ENCODE measurements at regions of chr14 and their contacts with region 1.

Region 1: GRCh38 chr14:36070031-36070719 is 106.3 kb downstream of the PTCSC3 start:
- DNase-seq: no peak
- H3K4me3 Mint-ChIP-seq: no peak overlapping the region
- H3K27ac Mint-ChIP-seq: no peak overlapping the region
- H3K4me1 Mint-ChIP-seq: no peaks in the 10 kb centered on the region
- H3K27me3 Mint-ChIP-seq: peaks cover 22% of the 10 kb centered on the region

Region 2: DNA sequence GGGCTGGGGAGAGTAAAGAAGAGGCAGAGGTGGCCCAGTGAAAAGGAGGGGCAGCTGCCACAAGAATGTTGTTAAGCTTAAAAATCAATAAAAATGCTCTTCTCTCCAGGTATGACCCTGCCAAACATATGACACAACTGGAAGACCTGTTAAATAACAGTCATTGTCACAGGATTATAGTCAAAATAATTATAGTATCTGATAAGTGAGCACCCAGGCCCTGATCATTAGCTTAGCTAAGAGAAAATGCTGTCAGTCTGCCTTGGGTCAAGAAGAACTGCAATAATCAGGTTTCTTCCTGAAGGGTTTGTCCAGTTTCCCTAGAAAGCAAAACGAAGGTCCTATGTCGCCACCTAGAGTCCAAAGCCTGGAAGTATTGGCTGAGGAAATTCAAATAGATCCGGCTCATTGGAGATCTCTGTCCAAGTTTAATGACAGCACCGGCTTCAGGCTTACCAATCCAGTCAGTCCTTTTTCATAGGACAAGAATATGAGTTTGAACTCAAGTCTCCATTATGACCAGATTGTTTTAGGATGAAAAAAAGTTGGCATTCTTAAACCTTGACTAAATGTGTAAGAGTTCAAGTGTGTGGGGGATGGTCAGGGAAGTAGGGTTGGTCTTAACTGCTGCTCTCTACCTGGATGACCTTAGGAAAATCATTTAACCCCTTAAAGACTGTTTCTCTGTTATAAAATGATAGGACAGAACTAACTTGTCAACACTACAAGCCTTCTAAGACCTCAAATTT is 534.8 kb after region 1 on chr14:
- intact Hi-C with region 1: loop called (anchors 1 kb)
- DNase-seq: peak; percentile 12
- H3K4me3 Mint-ChIP-seq: no peak overlapping the region
- H3K27ac Mint-ChIP-seq: no peak overlapping the region
- H3K4me1 Mint-ChIP-seq: no peaks in the 10 kb centered on the region
- H3K27me3 Mint-ChIP-seq: peaks cover 2% of the 10 kb centered on the region